ENCODE measurements at regions of chr19 and their contacts with region 1.

Region 1: DNA sequence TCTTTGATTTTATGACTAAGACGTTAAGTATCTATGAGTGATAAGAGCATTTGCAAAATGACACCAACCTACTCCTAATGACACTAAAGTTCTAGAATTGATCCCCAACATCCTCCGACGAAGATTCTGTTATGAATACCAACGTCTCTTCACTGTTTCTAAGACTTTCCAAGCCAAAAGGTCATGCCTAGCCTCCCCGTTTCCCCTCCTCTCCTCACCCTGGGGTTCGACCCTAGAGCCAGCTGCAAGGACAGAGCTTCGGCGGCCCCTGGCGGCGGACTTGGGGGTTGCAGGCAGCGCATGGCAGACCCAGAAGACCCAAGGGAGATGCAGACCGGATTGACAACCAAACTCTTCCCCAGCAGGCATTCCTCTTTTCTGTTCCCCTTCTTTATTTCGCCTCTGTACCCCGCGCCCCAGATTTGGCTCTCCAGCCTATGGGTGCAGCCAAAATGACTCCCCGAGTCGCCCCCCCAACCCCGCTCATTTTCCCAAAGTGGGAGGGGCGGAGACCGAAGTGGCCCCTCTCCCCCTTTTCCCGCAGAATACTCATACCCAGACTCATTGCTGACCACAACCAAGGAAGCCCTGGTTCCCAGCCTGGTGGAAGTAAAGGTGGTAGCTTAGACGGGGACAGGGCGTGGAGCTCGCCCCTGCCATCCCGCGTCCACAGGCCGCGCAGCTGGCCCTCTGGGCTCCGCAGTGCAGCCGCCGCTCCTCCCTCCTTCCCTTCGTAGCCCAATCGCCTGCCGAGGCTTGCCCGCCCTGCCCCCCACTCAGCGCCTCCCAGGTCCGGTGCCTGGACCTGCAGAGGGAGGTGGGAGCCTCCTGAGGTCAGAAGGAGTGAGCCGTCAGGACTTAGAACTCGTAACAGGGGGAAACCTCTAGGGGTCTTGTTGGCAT is 4.1 kb upstream of the EML2 start:
- DNase-seq: peak; percentile 87
- H3K4me3 Mint-ChIP-seq: peak overlapping the region; percentile 41
- H3K27ac Mint-ChIP-seq: peak overlapping the region; percentile 90
- H3K4me1 Mint-ChIP-seq: peaks cover 31% of the 10 kb centered on the region
- H3K27me3 Mint-ChIP-seq: no peaks in the 10 kb centered on the region
- CTCF ChIP-seq: peak; percentile 99

Region 2: DNA sequence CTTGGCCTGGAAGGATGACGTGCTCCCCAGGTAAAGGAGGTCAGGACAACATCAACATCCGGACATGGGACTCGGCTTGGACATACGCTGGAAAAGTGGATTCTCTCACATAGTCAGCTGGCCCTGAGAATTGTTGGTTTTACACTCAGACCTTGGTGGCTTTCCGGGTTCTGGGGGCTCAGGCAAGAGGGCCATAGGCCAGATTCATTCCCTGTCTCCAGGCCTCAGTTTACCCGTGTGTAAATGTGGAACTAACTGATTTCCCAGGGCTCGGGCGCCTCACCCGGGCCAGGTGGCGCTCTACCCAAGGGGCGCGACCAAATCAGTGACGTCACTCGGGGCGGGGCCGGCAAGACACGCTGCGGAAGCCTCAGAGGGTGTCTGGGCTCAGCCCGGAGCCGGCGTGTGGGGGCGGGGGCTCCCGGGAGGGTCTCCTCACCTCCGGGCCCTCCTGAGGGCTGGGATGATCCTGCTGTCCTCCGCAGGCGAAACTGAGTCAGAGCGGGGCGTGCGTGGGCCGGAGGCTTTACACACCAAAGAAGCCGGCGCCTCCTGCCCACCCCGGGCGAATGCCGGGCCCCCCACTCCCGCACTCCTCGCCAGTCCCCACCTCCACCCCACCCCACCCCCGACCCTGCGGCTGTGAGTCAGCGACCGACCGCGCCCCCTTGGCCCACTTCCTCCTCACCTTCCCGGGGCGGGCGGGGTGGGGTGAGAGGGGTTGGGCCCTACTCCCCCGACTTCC is 136.9 kb before region 1 on chr19:
- CTCF ChIA-PET with region 1: interaction called, 7 read pairs
- POLR2A ChIA-PET with region 1: interaction called, 17 read pairs
- intact Hi-C with region 1: loop called (anchors 5 kb)
- DNase-seq: peak; percentile 96
- H3K4me3 Mint-ChIP-seq: peak overlapping the region; percentile 99
- H3K27ac Mint-ChIP-seq: peak overlapping the region; percentile 91
- H3K4me1 Mint-ChIP-seq: peaks cover 26% of the 10 kb centered on the region
- H3K27me3 Mint-ChIP-seq: no peaks in the 10 kb centered on the region
- CTCF ChIP-seq: no peak

Region 3: DNA sequence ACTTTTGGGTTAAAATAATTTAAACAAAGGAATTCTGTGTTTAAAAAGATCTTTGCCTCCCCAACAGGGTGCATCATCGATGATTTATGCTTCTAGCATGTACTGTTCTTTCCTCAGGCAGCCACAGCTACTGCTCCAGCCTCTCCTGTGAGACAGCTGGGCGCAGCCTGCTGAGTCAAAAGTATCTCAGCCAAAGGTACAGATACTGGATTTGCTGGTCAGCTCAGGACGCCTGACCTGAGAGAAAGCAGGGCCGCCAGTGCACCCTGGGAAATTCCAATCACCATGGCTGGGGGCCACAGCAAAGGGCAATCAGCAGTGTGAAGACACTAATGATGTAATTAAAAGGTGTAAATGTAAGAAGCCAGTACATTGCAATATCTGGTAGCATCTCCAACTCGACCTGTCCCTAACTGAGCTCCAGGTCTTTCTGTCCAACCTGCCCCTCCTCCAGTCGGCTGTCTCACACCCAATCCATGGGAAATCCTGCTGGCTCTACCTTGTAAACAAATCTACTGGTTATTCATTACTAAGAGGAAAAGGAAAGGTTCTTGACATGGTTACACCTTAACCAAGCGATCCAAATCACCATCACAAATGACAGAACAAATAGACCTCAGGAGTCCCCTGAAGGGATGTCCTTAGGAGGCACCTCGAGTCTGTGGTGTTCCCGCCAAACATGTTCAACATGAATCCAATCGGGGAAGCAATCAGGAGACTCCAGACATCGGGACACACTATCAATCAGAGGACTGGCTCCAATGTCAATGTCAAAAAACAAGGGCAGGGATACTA is 66.0 kb before region 1 on chr19:
- CTCF ChIA-PET with region 1: interaction called, 6 read pairs
- POLR2A ChIA-PET with region 1: interaction called, 19 read pairs
- intact Hi-C with region 1: no loop called
- DNase-seq: peak; percentile 77
- H3K4me3 Mint-ChIP-seq: peak overlapping the region; percentile 57
- H3K27ac Mint-ChIP-seq: peak overlapping the region; percentile 84
- H3K4me1 Mint-ChIP-seq: peaks cover 27% of the 10 kb centered on the region
- H3K27me3 Mint-ChIP-seq: no peaks in the 10 kb centered on the region
- CTCF ChIP-seq: no peak

Region 4: DNA sequence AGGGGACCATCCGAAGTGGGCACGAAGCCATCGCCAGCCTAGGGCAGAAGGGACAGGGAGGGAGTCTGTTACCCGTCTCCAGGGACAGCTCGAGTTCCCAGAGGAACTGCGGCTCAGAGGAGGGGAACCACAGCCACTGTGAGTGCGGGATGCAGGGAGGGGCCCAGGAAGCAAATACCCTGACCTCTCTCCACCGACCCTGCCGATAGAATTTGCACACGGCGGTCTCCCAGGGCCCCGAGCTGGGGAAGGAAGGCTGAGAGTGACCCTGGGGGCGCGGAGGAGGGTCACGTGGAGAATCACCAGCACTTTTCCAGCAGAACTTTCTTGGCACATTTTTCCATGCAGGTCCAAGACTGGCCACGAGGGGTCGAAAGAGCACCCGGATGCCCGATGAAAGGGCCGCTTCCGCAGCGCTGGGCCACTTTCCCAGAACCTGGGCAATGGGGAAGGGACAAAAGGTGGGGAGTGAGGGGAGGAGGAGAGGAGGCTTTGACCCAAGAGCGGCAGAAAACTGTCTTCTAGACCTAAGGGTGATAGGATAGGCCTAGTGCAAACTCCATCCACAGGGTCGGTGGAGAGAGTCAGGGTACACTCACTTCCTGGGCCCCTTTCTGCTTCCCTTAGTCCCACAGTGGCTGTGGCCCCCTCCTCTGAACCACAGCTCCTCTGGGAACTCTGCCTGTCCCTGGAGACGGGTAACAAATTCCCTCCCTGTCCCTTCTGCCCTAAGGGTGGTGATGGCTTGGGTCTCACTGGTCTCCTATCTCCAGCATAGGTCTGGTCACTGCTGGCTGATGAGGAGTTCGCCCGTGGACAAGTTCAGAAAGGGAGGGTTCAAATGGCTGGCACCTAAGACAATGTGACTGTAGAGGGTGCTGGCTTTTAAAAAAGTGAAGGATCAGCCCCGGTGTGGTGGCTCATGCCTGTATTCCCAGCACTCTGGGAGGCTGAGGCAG is 35.9 kb before region 1 on chr19:
- CTCF ChIA-PET with region 1: interaction called, 99 read pairs
- POLR2A ChIA-PET with region 1: interaction called, 50 read pairs
- intact Hi-C with region 1: loop called (anchors 1 kb)
- DNase-seq: peak; percentile 77
- H3K4me3 Mint-ChIP-seq: no peak overlapping the region
- H3K27ac Mint-ChIP-seq: peak overlapping the region; percentile 80
- H3K4me1 Mint-ChIP-seq: peaks cover 8% of the 10 kb centered on the region
- H3K27me3 Mint-ChIP-seq: peaks cover 7% of the 10 kb centered on the region
- CTCF ChIP-seq: peak; percentile 74

Region 5: GRCh38 chr19:45681391-45682015 is 38.2 kb after region 1 on chr19:
- CTCF ChIA-PET with region 1: interaction called, 7 read pairs
- POLR2A ChIA-PET with region 1: interaction called, 9 read pairs
- intact Hi-C with region 1: loop called (anchors 5 kb)
- DNase-seq: peak; percentile 89
- H3K4me3 Mint-ChIP-seq: peak overlapping the region; percentile 72
- H3K27ac Mint-ChIP-seq: peak overlapping the region; percentile 61
- H3K4me1 Mint-ChIP-seq: peaks cover 11% of the 10 kb centered on the region
- H3K27me3 Mint-ChIP-seq: no peaks in the 10 kb centered on the region
- CTCF ChIP-seq: peak; percentile 92

Measured in MCF 10A (cell line).